Heart left ventricle (tissue), 16 donors: ENCODE measurements at regions of chr16 and their contacts with region 1.

Region 1: DNA sequence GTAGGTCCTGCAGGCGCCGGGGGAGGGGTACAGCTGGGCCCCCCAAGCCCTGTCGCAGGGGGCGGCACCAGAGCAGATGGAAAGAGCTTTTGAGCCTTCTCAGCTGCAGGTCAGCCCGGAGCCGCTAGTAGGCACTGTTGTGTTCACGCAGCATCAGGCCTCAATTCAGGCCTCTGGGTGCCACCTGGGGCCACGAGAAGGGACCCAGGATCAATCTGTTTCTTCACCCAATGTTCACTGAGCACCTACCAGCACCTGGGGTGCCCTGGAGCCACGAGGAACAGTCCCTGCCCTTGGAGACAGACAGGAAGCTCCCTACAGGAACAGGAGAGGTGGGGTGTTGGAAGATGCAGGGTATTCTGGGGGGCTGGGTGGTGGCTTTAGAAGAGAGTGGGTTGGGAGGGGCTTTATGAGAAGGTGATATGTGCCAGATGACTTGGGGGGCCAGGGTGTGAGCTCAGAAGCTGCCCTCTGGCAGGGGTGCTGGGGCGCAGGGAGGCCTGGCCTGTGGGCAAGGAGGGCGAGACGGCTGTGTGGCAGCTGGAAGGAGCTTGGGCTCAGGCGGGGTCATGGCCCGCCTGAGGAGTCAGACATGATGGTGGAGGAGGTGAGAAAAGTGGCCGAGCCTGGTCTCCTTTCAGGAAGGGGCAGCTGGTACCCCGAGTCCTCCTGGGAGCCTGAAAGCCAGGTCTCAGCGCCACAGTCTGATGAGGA is 121.9 kb upstream of the GSE1 start:
- DNase-seq: no peak
- ATAC-seq: peak in 2 of 4 donors; percentile 3 to 5
- H3K4me3 ChIP-seq: no peak overlapping the region
- H3K27ac ChIP-seq: peak overlapping the region in 10 of 12 donors; percentile 42 to 82 (median 60)
- H3K4me1 ChIP-seq: peaks cover 5 to 29% (median 18%) of the 10 kb centered on the region in 12 donors
- H3K27me3 ChIP-seq: no peaks in the 10 kb centered on the region
- CTCF ChIP-seq: peak in 9 of 12 donors; percentile 7 to 39 (median 25)
- POLR2A ChIP-seq: no peak

Region 2: GRCh38 chr16:85428168-85428898 is 62.9 kb before region 1 on chr16:
- intact Hi-C with region 1: loop called in 2 of 10 experiments (anchors 5 to 10 kb)
- DNase-seq: peak in 3 of 5 donors; percentile 23 to 68 (median 37)
- ATAC-seq: peak in 3 of 4 donors; percentile 25 to 45 (median 30)
- H3K4me3 ChIP-seq: no peak overlapping the region
- H3K27ac ChIP-seq: no peak overlapping the region
- H3K4me1 ChIP-seq: no peaks in the 10 kb centered on the region
- H3K27me3 ChIP-seq: no peaks in the 10 kb centered on the region
- CTCF ChIP-seq: peak; percentile 34 to 53 (median 42)
- POLR2A ChIP-seq: no peak